Right ventricle myocardium inferior (tissue), 1 donor: ENCODE measurements at regions of chr13 and their contacts with region 1.

Region 1: GRCh38 chr13:101869553-101869952 is 417.1 kb downstream of the ITGBL1 start:
- DNase-seq: no peak
- ATAC-seq: no peak

Region 2: GRCh38 chr13:101795025-101795424 is 74.5 kb before region 1 on chr13:
- intact Hi-C with region 1: loop called (anchors 5 kb)
- DNase-seq: no peak
- ATAC-seq: peak; percentile 62

Region 3: DNA sequence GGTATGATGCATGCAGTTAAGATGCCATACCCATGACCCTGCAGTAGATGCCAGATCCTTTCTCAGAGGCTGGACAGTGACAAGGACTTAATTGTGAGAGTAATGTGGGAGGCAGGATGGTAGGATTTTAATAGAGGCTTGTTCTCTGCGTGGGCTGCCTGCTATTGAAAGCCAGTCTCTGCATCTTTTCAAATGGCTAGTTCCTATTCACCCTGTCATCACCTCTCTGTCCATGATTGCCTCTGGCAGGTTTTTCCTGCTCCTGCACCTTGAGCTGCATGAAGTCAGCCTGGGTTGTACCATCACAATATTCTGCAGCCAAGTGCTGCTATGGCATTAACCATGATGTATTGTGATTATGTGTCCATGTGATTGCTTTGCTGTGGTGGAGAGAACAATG is 23.5 kb after region 1 on chr13:
- intact Hi-C with region 1: loop called (anchors 2 kb)
- DNase-seq: no peak
- ATAC-seq: peak; percentile 81

Region 4: DNA sequence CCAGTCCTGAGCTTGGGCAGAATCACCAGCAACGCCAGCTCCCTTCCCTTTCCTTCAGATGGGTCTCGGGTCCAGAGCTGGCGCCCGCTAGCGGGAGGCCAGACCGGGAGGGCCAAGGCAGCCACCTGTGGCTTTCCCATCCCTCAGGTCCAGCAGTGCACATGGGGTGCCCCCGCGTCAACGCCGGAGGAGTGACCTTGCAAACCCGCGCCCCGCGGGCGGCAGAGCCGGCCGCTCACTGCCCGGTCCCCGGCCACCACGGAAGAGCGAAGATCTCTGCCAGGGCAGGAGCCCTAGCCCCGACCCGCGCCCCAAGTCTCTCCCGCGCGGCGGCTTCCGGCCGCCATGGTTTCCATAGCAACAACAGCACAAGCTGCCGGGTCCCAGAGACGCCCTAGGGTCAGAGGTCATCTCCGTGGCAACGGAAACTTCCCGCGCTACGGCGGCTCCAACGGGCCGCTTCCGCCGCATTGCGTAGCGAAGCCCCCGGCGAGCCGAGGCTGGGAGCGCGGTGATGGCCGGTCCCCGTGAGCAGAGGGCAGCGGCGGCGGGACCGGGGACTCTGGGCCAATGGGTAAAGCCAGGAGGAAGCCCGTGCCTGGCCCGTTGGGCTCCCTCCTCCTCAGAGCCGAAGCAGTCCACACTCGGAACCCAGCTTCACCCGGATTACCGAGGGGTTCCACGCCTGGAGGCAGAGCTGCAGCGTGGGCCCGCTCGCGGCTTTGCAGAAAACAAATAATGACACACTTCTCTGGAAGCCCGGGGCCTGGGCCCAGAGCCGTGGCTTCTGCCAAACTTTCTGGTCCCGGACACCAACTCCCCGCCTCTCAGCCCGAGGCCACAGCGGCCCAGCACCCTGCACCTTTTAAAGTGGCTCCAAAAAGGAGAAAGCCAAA is 524.9 kb after region 1 on chr13:
- intact Hi-C with region 1: loop called (anchors 2 kb)
- DNase-seq: peak; percentile 94
- ATAC-seq: peak; percentile 97